Head of caudate nucleus (tissue), 42 donors: ENCODE measurements at regions of chr14 and their contacts with region 1.

Region 1: DNA sequence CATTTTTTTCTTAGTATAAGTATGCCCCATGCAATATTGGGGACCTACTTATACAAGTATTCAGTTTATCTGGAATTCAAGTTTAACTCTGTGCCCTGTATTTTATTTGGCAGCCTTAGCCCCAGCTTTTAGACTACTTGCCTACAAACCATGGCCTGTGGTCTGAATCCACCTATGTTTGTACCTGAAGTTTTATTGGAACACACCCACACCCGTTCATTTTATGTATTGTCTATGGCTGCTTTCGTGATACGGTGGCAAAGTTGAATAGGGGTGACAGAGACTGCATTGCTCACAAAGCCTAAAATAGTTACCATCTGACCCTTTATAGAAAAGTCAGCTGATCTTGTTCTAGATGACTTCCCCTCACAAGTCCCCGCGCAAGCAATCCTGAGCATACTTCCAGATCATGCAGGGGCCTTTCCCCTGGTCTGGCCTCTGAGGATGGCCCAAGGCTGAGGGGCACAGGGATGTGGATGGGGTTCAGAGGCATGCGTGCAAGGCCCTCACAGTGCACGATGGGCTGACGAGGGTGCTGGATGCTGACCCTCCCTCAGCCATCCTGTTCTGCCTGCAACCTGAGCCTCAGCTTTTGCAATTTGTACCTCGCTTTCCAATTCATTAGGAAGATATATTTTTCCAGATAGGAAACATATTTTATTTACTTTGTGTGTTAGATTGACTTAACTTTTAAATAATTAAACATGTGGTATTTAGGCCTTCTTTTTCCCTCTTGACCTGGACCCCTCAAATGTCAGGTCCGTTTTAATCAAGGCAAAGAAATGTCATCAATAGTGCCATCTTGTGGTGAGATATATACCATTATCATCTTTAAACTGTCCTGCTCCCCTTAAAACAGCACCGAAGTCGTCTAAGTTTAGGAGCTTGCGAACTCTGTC is 527.3 kb upstream of the CCDC196 start:
- DNase-seq: peak in 2 of 42 donors; percentile 19 to 27

Region 2: GRCh38 chr14:65686761-65687160 is 272.2 kb before region 1 on chr14:
- intact Hi-C with region 1: no loop called
- DNase-seq: no peak

Region 3: GRCh38 chr14:66070509-66071319 is 111.8 kb after region 1 on chr14:
- intact Hi-C with region 1: loop called (anchors 10 kb)
- DNase-seq: peak in 39 of 42 donors; percentile 7 to 85 (median 53)